B cell (primary cell): ENCODE measurements at regions of chr11 and their contacts with region 1.

Region 1: GRCh38 chr11:71448257-71449171 is at the start of gene DHCR7:
- DNase-seq: peak; percentile 92
- ATAC-seq: peak; percentile 79
- H3K4me3 ChIP-seq: peak within 1 kb of the TSS; percentile 71 to 98 (median 94)
- H3K4me3 Mint-ChIP-seq: peak within 1 kb of the TSS; percentile 93
- H3K27ac ChIP-seq: peak within 1 kb of the TSS; percentile 74 to 80
- H3K27ac Mint-ChIP-seq: peak within 1 kb of the TSS; percentile 86
- H3K4me1 ChIP-seq: peaks cover 18 to 35% of the 10 kb centered on the region in 2 donors
- H3K4me1 Mint-ChIP-seq: peaks cover 40% of the 10 kb centered on the region
- H3K27me3 ChIP-seq: no peaks in the 10 kb centered on the region
- H3K27me3 Mint-ChIP-seq: no peaks in the 10 kb centered on the region
- CTCF ChIP-seq: no peak
- total RNA-seq, gene DHCR7: 15.3 and 16.2 TPM in 2 replicates

Region 2: DNA sequence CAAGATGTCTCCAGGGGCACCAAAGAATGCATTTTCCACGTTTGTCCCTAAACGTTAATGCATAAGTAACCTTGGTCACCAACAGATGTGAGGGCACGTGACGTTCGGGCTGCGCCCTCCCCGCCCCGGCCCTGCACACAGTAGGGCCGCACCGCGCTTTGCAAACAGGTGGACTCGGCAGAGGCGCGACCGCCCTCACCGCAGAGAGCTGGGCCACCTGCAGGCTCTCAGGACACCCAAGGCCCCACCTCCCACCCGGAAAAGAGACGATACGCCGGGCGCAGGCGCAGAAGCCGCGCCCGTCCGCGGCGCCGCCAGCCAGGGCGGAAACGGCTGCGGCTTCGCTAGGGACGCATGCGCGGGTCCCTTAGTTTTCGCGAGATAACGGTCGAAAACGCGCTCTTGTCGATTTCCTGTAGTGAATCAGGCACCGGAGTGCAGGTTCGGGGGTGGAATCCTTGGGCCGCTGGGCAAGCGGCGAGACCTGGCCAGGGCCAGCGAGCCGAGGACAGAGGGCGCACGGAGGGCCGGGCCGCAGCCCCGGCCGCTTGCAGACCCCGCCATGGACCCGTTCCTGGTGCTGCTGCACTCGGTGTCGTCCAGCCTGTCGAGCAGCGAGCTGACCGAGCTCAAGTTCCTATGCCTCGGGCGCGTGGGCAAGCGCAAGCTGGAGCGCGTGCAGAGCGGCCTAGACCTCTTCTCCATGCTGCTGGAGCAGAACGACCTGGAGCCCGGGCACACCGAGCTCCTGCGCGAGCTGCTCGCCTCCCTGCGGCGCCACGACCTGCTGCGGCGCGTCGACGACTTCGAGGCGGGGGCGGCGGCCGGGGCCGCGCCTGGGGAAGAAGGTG is 1245.4 kb before region 1 on chr11 and contains the start of gene FADD:
- CTCF ChIA-PET with region 1: no interaction called
- POLR2A ChIA-PET with region 1: no interaction called
- intact Hi-C with region 1: loop called (anchors 5 kb)
- DNase-seq: peak; percentile 95
- ATAC-seq: peak; percentile 78
- H3K4me3 ChIP-seq: peak within 1 kb of the TSS; percentile 80 to 98 (median 96)
- H3K4me3 Mint-ChIP-seq: peak within 1 kb of the TSS; percentile 93
- H3K27ac ChIP-seq: peak within 1 kb of the TSS; percentile 49 to 84
- H3K27ac Mint-ChIP-seq: peak within 1 kb of the TSS; percentile 94
- H3K4me1 ChIP-seq: peaks cover 18 to 26% of the 10 kb centered on the region in 2 donors
- H3K4me1 Mint-ChIP-seq: peaks cover 31% of the 10 kb centered on the region
- H3K27me3 ChIP-seq: no peaks in the 10 kb centered on the region
- H3K27me3 Mint-ChIP-seq: no peaks in the 10 kb centered on the region
- CTCF ChIP-seq: no peak
- total RNA-seq, gene FADD: 26.6 and 27.1 TPM in 2 replicates

Region 3: DNA sequence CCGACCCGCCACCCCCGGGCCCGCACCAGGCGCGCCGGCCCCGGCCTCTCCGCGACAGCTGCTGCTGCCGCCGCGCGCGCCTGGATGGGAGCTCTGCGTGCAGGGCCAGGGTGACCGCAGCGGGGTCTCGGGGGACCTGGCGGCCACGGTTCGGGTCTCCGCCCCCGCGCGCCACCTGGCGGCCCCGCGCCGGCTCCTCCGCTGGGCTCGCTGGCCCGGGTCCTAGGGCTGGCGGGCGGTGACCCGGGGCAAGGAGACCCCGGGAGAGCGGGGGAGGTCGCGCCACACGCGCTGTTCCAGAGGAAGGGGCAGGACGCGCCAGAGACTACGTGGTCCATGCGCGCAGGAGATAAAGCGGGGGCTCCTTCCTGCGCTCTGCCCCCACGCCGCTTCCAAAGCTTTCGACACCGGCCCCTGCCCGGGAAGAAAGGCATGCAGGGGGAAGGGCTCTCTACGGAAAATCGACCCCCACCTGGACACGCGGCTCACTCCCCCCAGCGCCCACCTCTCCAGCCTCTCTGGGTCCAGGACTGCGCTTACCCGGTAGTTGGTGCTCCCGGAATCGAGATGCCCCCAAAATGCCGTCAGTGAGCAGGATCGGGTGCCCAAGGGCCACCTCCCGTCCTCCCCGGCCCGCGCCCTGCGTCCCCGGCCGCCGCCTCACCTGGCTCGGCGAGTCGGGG is 196.6 kb before region 1 on chr11:
- CTCF ChIA-PET with region 1: no interaction called
- POLR2A ChIA-PET with region 1: no interaction called
- intact Hi-C with region 1: loop called (anchors 2 kb)
- DNase-seq: peak; percentile 76
- ATAC-seq: peak; percentile 88
- H3K4me3 ChIP-seq: peak overlapping the region in 4 of 5 experiments; percentile 29 to 58 (median 39)
- H3K4me3 Mint-ChIP-seq: peak overlapping the region; percentile 77
- H3K27ac ChIP-seq: no peak overlapping the region
- H3K27ac Mint-ChIP-seq: no peak overlapping the region
- H3K4me1 ChIP-seq: peaks cover 30 to 34% of the 10 kb centered on the region in 2 donors
- H3K4me1 Mint-ChIP-seq: peaks cover 21% of the 10 kb centered on the region
- H3K27me3 ChIP-seq: peaks cover 0 to 63% (median 43%) of the 10 kb centered on the region in 4 experiments
- H3K27me3 Mint-ChIP-seq: peaks cover 63% of the 10 kb centered on the region
- CTCF ChIP-seq: no peak

Region 4: GRCh38 chr11:71372693-71373657 is 75.5 kb before region 1 on chr11:
- CTCF ChIA-PET with region 1: no interaction called
- POLR2A ChIA-PET with region 1: no interaction called
- intact Hi-C with region 1: loop called (anchors 2 kb)
- DNase-seq: no peak
- ATAC-seq: no peak
- H3K4me3 ChIP-seq: peak overlapping the region in 2 of 5 experiments; percentile 46 to 49
- H3K4me3 Mint-ChIP-seq: peak overlapping the region; percentile 71
- H3K27ac ChIP-seq: no peak overlapping the region
- H3K27ac Mint-ChIP-seq: peak overlapping the region; percentile 62
- H3K4me1 ChIP-seq: peaks cover 62 to 69% of the 10 kb centered on the region in 2 donors
- H3K4me1 Mint-ChIP-seq: peaks cover 68% of the 10 kb centered on the region
- H3K27me3 ChIP-seq: peaks cover 0 to 16% (median 7%) of the 10 kb centered on the region in 4 experiments
- H3K27me3 Mint-ChIP-seq: peaks cover 24% of the 10 kb centered on the region
- CTCF ChIP-seq: no peak

Region 5: GRCh38 chr11:71383461-71383860 is 65.1 kb before region 1 on chr11:
- CTCF ChIA-PET with region 1: no interaction called
- POLR2A ChIA-PET with region 1: no interaction called
- intact Hi-C with region 1: loop called (anchors 2 kb)
- DNase-seq: peak; percentile 76
- ATAC-seq: peak; percentile 71
- H3K4me3 ChIP-seq: no peak overlapping the region
- H3K4me3 Mint-ChIP-seq: peak overlapping the region; percentile 56
- H3K27ac ChIP-seq: peak overlapping the region in 1 of 2 donors; percentile 64
- H3K27ac Mint-ChIP-seq: peak overlapping the region; percentile 68
- H3K4me1 ChIP-seq: peaks cover 71 to 72% of the 10 kb centered on the region in 2 donors
- H3K4me1 Mint-ChIP-seq: peaks cover 65% of the 10 kb centered on the region
- H3K27me3 ChIP-seq: no peaks in the 10 kb centered on the region
- H3K27me3 Mint-ChIP-seq: peaks cover 6% of the 10 kb centered on the region
- CTCF ChIP-seq: no peak

Region 6: GRCh38 chr11:71488681-71489270 is 40.3 kb after region 1 on chr11:
- CTCF ChIA-PET with region 1: no interaction called
- POLR2A ChIA-PET with region 1: no interaction called
- intact Hi-C with region 1: no loop called
- DNase-seq: no peak
- ATAC-seq: no peak
- H3K4me3 ChIP-seq: no peak overlapping the region
- H3K4me3 Mint-ChIP-seq: no peak overlapping the region
- H3K27ac ChIP-seq: no peak overlapping the region
- H3K27ac Mint-ChIP-seq: no peak overlapping the region
- H3K4me1 ChIP-seq: no peaks in the 10 kb centered on the region
- H3K4me1 Mint-ChIP-seq: no peaks in the 10 kb centered on the region
- H3K27me3 ChIP-seq: no peaks in the 10 kb centered on the region
- H3K27me3 Mint-ChIP-seq: no peaks in the 10 kb centered on the region
- CTCF ChIP-seq: no peak

Region 7: DNA sequence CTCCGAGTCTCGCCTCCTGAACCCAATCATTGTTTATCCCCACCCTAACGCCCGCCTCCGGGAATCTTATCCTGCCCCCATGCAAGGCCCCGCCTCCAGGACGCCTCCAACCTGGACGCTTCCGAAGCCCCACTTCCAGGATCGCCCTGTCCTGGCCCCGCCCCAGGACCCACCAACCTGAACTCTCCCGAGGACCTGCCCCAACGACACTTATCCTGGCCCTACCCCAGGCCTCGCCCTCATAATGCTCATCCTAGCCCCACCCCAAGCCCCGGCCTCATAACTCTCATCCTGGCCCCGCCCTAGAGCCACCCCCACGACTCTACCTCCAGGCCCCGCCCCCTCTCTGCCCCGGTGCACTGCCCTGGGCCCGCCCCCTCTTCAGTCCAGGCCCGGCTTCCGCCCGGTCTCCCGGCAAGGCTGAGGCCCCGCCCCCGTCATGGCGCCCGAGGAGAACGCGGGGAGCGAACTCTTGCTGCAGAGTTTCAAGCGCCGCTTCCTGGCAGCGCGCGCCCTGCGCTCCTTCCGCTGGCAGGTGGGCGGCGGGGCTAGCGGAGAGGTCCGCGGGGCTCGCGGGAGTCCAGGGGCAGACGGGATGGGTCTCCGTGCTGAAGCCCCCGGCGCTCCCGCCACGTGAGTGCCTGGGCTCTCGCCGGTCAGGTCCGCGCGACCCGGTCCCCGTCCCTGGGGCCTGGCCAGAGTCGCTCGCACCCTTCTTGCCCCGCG is 338.7 kb after region 1 on chr11:
- CTCF ChIA-PET with region 1: no interaction called
- POLR2A ChIA-PET with region 1: no interaction called
- intact Hi-C with region 1: loop called (anchors 10 kb)
- DNase-seq: peak; percentile 97
- ATAC-seq: peak; percentile 93
- H3K4me3 ChIP-seq: peak overlapping the region; percentile 11 to 93 (median 76)
- H3K4me3 Mint-ChIP-seq: peak overlapping the region; percentile 92
- H3K27ac ChIP-seq: peak overlapping the region; percentile 93 to 95
- H3K27ac Mint-ChIP-seq: peak overlapping the region; percentile 98
- H3K4me1 ChIP-seq: peaks cover 0 to 10% of the 10 kb centered on the region in 2 donors
- H3K4me1 Mint-ChIP-seq: peaks cover 15% of the 10 kb centered on the region
- H3K27me3 ChIP-seq: no peaks in the 10 kb centered on the region
- H3K27me3 Mint-ChIP-seq: no peaks in the 10 kb centered on the region
- CTCF ChIP-seq: no peak